ENCODE measurements at regions of chr16 and their contacts with region 1.

Region 1: GRCh38 chr16:88533932-88534732 is 36.1 kb upstream of the ZC3H18 start:
- DNase-seq: peak in 1 of 2 donors; percentile 85
- H3K4me3 ChIP-seq: peak overlapping the region; percentile 80 to 94
- H3K27ac ChIP-seq: peak overlapping the region; percentile 73 to 81
- H3K4me1 ChIP-seq: peaks cover 0 to 12% of the 10 kb centered on the region in 2 donors
- H3K27me3 ChIP-seq: no peaks in the 10 kb centered on the region
- CTCF ChIP-seq: no peak

Region 2: DNA sequence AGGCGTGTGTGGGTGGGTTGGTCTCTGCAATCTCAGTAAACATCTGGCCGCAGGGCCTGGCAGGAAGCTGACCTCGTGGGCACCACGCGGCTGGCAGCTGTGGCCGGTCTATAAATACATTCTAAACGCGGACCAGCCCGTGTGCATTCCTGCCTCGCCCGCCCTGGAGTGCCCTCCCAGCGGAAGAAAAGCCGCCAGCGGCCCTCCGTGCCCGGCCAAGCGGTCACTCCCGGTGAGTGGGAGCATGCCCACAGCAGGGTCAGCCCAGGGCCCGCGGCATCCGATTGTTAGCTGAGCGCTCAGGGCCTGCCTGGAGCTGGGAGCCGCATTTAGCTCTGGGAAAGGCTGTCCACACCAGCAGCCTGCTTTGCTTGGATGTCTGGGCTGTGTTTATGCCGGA is 141.1 kb before region 1 on chr16:
- intact Hi-C with region 1: no loop called
- DNase-seq: peak; percentile 70 to 90
- H3K4me3 ChIP-seq: peak overlapping the region in 1 of 2 donors; percentile 27
- H3K27ac ChIP-seq: peak overlapping the region; percentile 78 to 90
- H3K4me1 ChIP-seq: peaks cover 10 to 18% of the 10 kb centered on the region in 2 donors
- H3K27me3 ChIP-seq: no peaks in the 10 kb centered on the region
- CTCF ChIP-seq: no peak

Region 3: DNA sequence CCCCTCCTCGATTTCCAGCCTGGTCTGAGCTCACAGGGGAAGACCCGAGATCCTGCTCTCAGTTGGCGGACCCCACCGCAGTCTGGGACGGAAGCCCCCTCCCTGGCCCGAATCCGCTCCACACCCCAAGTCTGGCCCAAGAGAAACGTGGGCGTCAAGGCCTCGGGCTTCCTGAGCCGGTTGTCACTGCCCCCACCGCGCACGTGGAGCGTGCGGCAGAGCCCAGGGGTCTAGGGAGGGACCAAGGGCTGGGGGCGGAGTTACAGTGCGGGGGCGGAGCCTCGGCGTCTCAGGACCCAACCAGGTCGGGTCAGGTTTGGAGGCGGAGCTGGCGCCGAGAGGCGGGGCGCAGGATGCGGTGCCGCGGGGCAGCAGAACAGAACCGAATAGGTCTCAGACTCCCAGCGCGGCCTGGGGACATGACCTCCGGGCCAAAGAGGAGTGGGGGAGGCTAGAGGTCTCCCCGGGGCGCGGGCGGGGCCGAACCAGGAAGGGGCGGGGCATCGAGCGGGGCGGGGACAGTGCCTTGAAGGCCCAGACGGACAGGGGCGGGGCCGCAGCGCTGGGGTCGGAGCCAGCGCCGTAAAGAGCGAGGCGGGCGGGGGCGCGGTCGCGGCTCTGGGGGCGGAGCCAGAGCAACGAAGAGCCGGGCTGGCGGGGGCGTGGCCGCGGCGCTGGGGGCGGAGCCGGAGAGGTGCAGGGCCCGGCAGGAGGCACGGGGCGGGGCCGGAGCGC is 81.5 kb before region 1 on chr16:
- intact Hi-C with region 1: loop called (anchors 2 kb)
- DNase-seq: peak; percentile 84 to 98
- H3K4me3 ChIP-seq: peak overlapping the region; percentile 75 to 84
- H3K27ac ChIP-seq: peak overlapping the region; percentile 56 to 58
- H3K4me1 ChIP-seq: peaks cover 7 to 24% of the 10 kb centered on the region in 2 donors
- H3K27me3 ChIP-seq: no peaks in the 10 kb centered on the region
- CTCF ChIP-seq: no peak

Measured in ascending aorta (tissue), 2 donors.